ENCODE measurements at regions of chr5 and their contacts with region 1.

Region 1: GRCh38 chr5:69188811-69189161 is 597 bp upstream of the CENPH start:
- DNase-seq: no peak
- ATAC-seq: no peak

Region 2: DNA sequence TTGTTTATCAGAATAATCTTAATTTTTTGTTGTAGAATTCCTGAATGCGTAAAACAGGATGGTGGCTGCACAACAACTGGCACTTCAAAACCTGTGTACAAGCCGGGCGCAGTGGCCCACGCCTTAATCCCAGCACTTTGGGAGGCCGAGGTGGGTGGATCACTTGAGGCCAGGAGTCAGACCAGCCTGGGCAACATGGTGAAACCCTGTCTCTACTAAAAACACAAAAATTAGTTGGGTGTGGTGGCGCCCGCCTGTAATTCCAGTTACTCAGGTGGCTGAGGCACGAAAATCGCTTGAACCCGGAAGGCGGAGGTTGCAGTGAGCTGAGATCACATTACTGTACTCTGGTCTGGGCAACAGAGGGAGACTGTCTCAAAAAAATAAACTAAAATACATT is 32.3 kb before region 1 on chr5:
- intact Hi-C with region 1: no loop called
- DNase-seq: no peak
- ATAC-seq: no peak

Region 3: GRCh38 chr5:69166686-69167492 is 21.9 kb before region 1 on chr5 and contains the start of gene CCNB1:
- intact Hi-C with region 1: loop called (anchors 1 kb)
- DNase-seq: peak; percentile 99
- ATAC-seq: peak; percentile 100
- total RNA-seq, gene CCNB1: 3.3 TPM